ENCODE measurements at regions of chr6 and their contacts with region 1.

Region 1: GRCh38 chr6:63571881-63572732 is at the starts of genes LOC128125822 and PTP4A1:
- DNase-seq: peak; percentile 99
- ATAC-seq: peak; percentile 84
- H3K4me3 ChIP-seq: peak within 1 kb of the TSS; percentile 85 to 94 (median 88)
- H3K4me3 Mint-ChIP-seq: peak within 1 kb of the TSS; percentile 87
- H3K27ac ChIP-seq: peak within 1 kb of the TSS; percentile 98 to 99
- H3K27ac Mint-ChIP-seq: peak within 1 kb of the TSS; percentile 100
- H3K4me1 ChIP-seq: peaks cover 16 to 19% of the 10 kb centered on the region in 2 donors
- H3K4me1 Mint-ChIP-seq: peaks cover 31% of the 10 kb centered on the region
- H3K27me3 ChIP-seq: peaks cover 0 to 2% (median 0%) of the 10 kb centered on the region in 4 experiments
- H3K27me3 Mint-ChIP-seq: no peaks in the 10 kb centered on the region
- CTCF ChIP-seq: no peak
- total RNA-seq, gene PTP4A1: 33.7 and 39.5 TPM in 2 replicates

Region 2: GRCh38 chr6:63352587-63353285 is 219.4 kb before region 1 on chr6:
- CTCF ChIA-PET with region 1: interaction called, 7 read pairs
- POLR2A ChIA-PET with region 1: no interaction called
- intact Hi-C with region 1: loop called (anchors 2 kb)
- DNase-seq: peak; percentile 80
- ATAC-seq: peak; percentile 81
- H3K4me3 ChIP-seq: peak overlapping the region; percentile 5 to 45 (median 14)
- H3K4me3 Mint-ChIP-seq: peak overlapping the region; percentile 65
- H3K27ac ChIP-seq: peak overlapping the region; percentile 38 to 56
- H3K27ac Mint-ChIP-seq: peak overlapping the region; percentile 80
- H3K4me1 ChIP-seq: peaks cover 13 to 18% of the 10 kb centered on the region in 2 donors
- H3K4me1 Mint-ChIP-seq: peaks cover 18% of the 10 kb centered on the region
- H3K27me3 ChIP-seq: no peaks in the 10 kb centered on the region
- H3K27me3 Mint-ChIP-seq: no peaks in the 10 kb centered on the region
- CTCF ChIP-seq: no peak

Region 3: DNA sequence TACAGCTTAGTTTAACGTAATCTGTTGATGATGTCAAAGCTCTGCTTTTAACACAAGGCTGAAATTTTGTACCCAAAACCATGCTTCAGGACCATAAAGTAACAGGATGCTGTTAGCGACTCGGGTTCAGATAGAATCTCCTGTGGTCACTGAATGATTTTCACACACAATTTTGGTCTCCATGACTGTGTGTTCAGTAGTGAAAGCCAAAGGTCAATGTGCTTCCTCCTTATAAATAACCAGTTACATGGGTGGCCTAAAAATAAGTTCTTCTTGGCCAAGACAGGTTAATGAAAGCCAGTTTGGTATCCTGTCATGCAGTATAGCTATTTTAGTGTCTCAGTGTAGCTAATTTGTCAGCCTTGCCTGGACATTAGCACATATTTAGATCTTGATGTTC is 18.9 kb before region 1 on chr6:
- CTCF ChIA-PET with region 1: no interaction called
- POLR2A ChIA-PET with region 1: no interaction called
- intact Hi-C with region 1: no loop called
- DNase-seq: no peak
- ATAC-seq: no peak
- H3K4me3 ChIP-seq: no peak overlapping the region
- H3K4me3 Mint-ChIP-seq: no peak overlapping the region
- H3K27ac ChIP-seq: no peak overlapping the region
- H3K27ac Mint-ChIP-seq: no peak overlapping the region
- H3K4me1 ChIP-seq: no peaks in the 10 kb centered on the region
- H3K4me1 Mint-ChIP-seq: no peaks in the 10 kb centered on the region
- H3K27me3 ChIP-seq: peaks cover 0 to under 1% (median 0%) of the 10 kb centered on the region in 4 experiments
- H3K27me3 Mint-ChIP-seq: peaks cover 12% of the 10 kb centered on the region
- CTCF ChIP-seq: no peak

Region 4: DNA sequence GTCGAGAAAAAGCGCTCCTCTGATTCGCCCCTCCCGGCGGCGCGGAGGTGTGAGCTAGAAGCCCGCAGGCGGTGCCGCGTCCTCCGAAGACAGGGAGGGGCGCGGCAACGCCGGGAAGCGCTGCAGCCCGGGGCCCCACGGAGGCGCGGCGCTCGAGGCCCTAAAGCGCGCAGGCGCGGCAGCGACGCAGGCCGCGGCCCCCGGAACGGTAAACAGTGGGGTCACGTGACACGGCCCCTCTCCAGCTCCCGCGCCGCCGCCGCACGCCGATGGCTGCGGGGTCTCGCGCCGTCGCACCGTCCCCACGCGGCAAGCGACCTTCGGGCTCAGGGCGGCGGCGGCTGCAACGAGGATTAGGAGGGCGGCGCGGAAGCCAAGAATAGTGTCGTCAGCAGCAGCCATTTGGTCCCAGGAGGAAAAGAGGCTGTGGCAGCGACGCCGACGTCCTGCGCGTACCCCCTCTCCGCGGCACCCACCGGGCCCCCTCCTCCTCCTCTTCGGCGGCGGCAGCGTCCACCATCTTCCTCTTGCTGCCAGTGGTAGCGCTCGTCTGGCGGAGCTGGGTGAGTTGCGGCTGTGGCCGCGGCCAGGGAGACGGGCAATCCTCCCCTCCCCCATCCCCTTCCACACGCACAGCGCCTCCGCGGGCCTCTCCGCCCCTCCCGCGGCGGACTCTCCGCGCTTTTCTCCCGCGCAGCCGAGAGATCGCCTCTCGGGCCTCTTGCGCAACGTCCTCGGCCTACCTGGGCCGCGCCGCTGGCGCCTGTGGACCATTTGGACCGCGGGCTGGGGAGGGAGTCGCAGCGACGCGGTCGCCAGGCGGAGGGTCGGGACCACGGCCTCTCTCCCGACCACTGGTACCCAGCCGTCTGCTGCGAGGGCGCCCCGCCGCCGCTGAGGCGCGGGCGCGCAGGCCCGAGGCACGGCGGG is 63.7 kb after region 1 on chr6 and contains the start of gene PHF3:
- CTCF ChIA-PET with region 1: interaction called, 14 read pairs
- POLR2A ChIA-PET with region 1: interaction called, 13 read pairs
- intact Hi-C with region 1: loop called (anchors 1 kb)
- DNase-seq: peak; percentile 97
- ATAC-seq: peak; percentile 87
- H3K4me3 ChIP-seq: peak within 1 kb of the TSS; percentile 66 to 92 (median 86)
- H3K4me3 Mint-ChIP-seq: peak within 1 kb of the TSS; percentile 99
- H3K27ac ChIP-seq: peak within 1 kb of the TSS; percentile 92 to 98
- H3K27ac Mint-ChIP-seq: peak within 1 kb of the TSS; percentile 96
- H3K4me1 ChIP-seq: peaks cover 14 to 38% of the 10 kb centered on the region in 2 donors
- H3K4me1 Mint-ChIP-seq: peaks cover 47% of the 10 kb centered on the region
- H3K27me3 ChIP-seq: no peaks in the 10 kb centered on the region
- H3K27me3 Mint-ChIP-seq: peaks cover 3% of the 10 kb centered on the region
- CTCF ChIP-seq: no peak
- total RNA-seq, gene PHF3: 109 and 111 TPM in 2 replicates

Region 5: GRCh38 chr6:63685446-63686379 is 113.6 kb after region 1 on chr6:
- CTCF ChIA-PET with region 1: no interaction called
- POLR2A ChIA-PET with region 1: no interaction called
- intact Hi-C with region 1: loop called (anchors 5 kb)
- DNase-seq: peak; percentile 71
- ATAC-seq: peak; percentile 92
- H3K4me3 ChIP-seq: no peak overlapping the region
- H3K4me3 Mint-ChIP-seq: peak overlapping the region; percentile 54
- H3K27ac ChIP-seq: peak overlapping the region; percentile 54 to 59
- H3K27ac Mint-ChIP-seq: peak overlapping the region; percentile 58
- H3K4me1 ChIP-seq: peaks cover 9 to 19% of the 10 kb centered on the region in 2 donors
- H3K4me1 Mint-ChIP-seq: peaks cover 53% of the 10 kb centered on the region
- H3K27me3 ChIP-seq: no peaks in the 10 kb centered on the region
- H3K27me3 Mint-ChIP-seq: no peaks in the 10 kb centered on the region
- CTCF ChIP-seq: no peak